Sigmoid colon (tissue), 7 donors: ENCODE measurements at regions of chr15 and their contacts with region 1.

Region 1: DNA sequence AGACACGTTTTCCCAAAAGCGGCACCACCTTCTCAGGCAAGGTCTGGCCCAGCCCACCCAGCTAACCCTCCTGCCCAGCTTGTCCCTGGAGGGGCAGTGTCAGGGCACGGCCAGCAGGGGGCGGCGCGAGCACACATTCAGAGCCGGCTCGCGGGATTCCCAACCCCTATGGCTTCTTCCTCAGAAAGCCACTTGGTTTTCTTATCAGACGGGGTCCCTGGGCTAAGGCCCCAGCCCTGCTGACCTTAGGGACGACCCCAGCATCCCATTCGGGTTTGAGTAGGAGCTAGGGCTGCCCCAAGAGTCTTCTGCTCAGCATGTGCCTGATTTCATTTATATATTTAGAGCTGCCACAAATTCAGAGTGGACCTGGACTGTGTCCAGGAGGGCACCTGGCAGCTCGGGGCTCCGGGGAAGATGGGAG is 14.5 kb downstream of the RLBP1 start:
- DNase-seq: peak; percentile 84
- H3K4me3 ChIP-seq: peak overlapping the region in 3 of 4 donors; percentile 15 to 20 (median 16)
- H3K27ac ChIP-seq: no peak overlapping the region
- H3K4me1 ChIP-seq: peaks cover 0 to 5% (median 4%) of the 10 kb centered on the region in 4 donors
- H3K27me3 ChIP-seq: no peaks in the 10 kb centered on the region
- CTCF ChIP-seq: peak; percentile 77 to 97 (median 92)
- EP300 ChIP-seq: no peak
- POLR2A ChIP-seq: no peak

Region 2: DNA sequence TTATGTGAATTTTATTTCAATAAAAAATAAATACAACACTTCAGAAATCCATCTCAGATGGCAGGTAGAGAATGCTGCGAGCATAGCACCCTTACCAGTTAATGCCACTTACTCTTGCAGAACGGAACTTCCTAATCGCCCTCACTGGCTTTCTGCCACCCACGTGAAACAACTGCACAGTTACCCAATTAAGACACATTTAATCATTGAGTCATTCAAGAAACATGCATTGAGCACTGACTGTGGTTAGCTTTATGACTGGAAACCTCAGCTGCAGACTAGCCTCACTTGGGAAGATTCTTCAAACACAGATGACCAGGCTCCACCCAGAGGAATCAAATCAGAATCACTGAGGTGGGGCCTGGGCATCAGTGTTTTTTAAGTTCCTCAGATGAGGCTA is 288.2 kb before region 1 on chr15:
- intact Hi-C with region 1: no loop called
- DNase-seq: no peak
- H3K4me3 ChIP-seq: no peak overlapping the region
- H3K27ac ChIP-seq: peak overlapping the region in 1 of 4 donors; percentile 29
- H3K4me1 ChIP-seq: peaks cover 0 to 4% (median 0%) of the 10 kb centered on the region in 4 donors
- H3K27me3 ChIP-seq: no peaks in the 10 kb centered on the region
- CTCF ChIP-seq: no peak
- EP300 ChIP-seq: no peak
- POLR2A ChIP-seq: no peak

Region 3: GRCh38 chr15:89299896-89300295 is 93.0 kb after region 1 on chr15:
- intact Hi-C with region 1: loop called (anchors 2 kb)
- DNase-seq: no peak
- H3K4me3 ChIP-seq: no peak overlapping the region
- H3K27ac ChIP-seq: no peak overlapping the region
- H3K4me1 ChIP-seq: no peaks in the 10 kb centered on the region
- H3K27me3 ChIP-seq: no peaks in the 10 kb centered on the region
- CTCF ChIP-seq: no peak
- EP300 ChIP-seq: no peak
- POLR2A ChIP-seq: no peak

Region 4: DNA sequence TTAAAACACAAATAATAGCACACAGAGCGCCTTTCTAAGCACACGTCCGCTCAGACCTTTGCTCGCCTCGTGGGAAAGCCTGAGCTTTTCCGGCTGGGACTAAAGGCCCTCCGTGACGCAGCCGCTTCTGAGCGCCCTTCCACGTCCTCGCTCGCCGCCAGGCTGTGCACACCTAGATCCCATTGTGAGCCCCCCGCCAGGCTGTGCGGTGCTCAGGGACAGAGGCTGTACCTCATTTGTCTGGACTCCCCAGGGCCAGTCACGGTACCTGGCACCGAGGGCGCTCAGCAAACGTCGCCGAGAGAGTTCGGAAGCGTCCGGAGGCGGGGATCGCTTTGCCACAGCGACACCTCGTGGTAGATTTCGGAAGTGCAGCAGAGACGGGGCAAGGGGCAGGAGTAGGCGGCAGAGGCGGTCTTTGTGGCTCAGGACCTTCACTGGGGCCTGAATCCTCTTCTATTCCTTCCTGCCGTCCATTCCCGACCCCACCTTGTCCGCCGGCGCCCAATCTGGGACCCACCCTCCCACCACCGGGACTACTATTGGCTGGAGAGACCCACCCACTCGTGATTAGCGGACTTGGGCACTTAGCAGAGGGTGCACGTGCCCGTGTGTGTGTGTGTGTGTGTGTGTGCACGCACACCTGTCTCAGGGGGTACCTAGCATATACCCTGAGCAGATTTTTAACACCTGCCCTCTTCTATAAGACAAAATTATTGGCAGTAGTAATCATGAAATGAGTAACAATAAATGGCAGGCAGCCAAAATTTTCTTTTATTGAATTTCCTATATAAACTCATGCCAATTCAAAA is 223.8 kb after region 1 on chr15:
- intact Hi-C with region 1: loop called (anchors 10 kb)
- DNase-seq: peak; percentile 86
- H3K4me3 ChIP-seq: peak overlapping the region in 3 of 4 donors; percentile 35 to 42 (median 39)
- H3K27ac ChIP-seq: no peak overlapping the region
- H3K4me1 ChIP-seq: peaks cover 0 to 10% (median 6%) of the 10 kb centered on the region in 4 donors
- H3K27me3 ChIP-seq: peaks cover 0 to 5% (median 0%) of the 10 kb centered on the region in 3 donors
- CTCF ChIP-seq: peak; percentile 91 to 99 (median 98)
- EP300 ChIP-seq: no peak
- POLR2A ChIP-seq: no peak

Region 5: DNA sequence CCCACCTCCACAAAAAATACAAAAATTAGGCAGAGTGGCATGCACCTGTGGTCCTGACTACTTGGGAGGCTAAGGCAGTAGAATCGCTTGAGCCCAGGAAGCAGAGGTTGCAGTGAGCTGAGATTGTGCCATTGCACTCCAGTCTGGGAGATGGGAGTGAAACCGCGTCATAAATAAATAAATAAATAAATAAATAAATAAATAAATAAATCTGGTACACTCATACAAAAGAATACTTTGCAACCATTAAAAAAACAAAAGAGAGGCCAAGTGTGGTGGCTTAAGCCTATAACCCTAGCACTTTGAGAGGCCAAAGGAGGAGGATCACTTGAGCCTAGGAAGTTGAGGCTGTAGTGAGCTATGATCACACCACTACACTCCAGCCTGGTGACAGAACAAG is 516.1 kb after region 1 on chr15:
- intact Hi-C with region 1: no loop called
- DNase-seq: no peak
- H3K4me3 ChIP-seq: no peak overlapping the region
- H3K27ac ChIP-seq: no peak overlapping the region
- H3K4me1 ChIP-seq: no peaks in the 10 kb centered on the region
- H3K27me3 ChIP-seq: no peaks in the 10 kb centered on the region
- CTCF ChIP-seq: no peak
- EP300 ChIP-seq: no peak
- POLR2A ChIP-seq: no peak